Activated naive CD4-positive, alpha-beta T cell treated with anti-CD3 and anti-CD28 coated beads for 36 hours (primary cell): ENCODE measurements at regions of chr12 and their contacts with region 1.

Region 1: DNA sequence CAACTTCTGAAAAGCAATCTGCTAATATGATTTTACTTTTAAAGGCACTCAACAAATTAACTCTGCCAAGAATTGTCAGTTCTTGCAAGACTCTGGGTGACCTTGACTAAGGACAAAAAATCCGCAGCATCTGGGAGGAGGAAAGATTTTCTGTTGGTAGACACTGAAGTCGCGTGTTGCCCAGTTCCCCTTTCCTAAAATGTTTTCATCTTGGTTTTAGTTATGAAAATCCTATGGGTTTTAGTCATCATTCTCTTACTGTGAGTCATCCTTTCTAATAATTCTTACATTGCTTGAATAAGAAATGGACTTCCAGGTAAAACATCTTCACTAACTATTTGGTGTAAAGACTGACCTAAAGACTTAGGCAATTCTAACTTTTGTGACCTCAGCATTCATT is 9.1 kb downstream of the GSG1 start:
- DNase-seq: no peak
- H3K4me3 Mint-ChIP-seq: no peak overlapping the region
- H3K27ac Mint-ChIP-seq: no peak overlapping the region
- H3K4me1 Mint-ChIP-seq: peaks cover 16% of the 10 kb centered on the region
- H3K27me3 Mint-ChIP-seq: no peaks in the 10 kb centered on the region

Region 2: DNA sequence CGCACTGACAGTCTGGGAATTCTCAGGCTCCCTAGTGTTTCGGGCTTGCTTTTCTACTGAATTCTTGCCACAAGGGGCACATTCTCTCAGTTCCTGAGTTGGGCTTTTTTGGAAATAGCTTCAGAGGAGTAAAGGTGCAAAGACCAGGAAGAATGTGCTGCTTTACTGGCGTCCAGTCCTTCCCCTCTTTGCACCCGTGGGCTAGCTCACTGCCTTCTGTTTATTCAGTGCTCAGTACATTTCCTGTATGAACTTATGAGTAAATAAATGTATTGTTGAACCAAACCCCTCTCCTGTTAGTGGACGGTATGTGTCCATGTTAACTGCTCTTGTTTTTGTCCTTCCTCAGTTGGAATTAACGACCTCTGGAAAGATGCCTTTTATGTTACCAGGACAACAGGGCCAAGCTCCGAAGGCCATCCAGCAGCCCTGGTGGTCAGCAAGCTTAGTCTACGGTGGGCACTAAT is 14.9 kb before region 1 on chr12:
- CTCF ChIA-PET with region 1: no interaction called
- intact Hi-C with region 1: no loop called
- DNase-seq: no peak
- H3K4me3 Mint-ChIP-seq: no peak overlapping the region
- H3K27ac Mint-ChIP-seq: no peak overlapping the region
- H3K4me1 Mint-ChIP-seq: no peaks in the 10 kb centered on the region
- H3K27me3 Mint-ChIP-seq: no peaks in the 10 kb centered on the region

Region 3: GRCh38 chr12:13135371-13136178 is 41.2 kb after region 1 on chr12:
- CTCF ChIA-PET with region 1: no interaction called
- intact Hi-C with region 1: no loop called
- DNase-seq: no peak
- H3K4me3 Mint-ChIP-seq: no peak overlapping the region
- H3K27ac Mint-ChIP-seq: no peak overlapping the region
- H3K4me1 Mint-ChIP-seq: no peaks in the 10 kb centered on the region
- H3K27me3 Mint-ChIP-seq: no peaks in the 10 kb centered on the region

Region 4: GRCh38 chr12:13170892-13171490 is 76.6 kb after region 1 on chr12:
- CTCF ChIA-PET with region 1: no interaction called
- intact Hi-C with region 1: no loop called
- DNase-seq: no peak
- H3K4me3 Mint-ChIP-seq: no peak overlapping the region
- H3K27ac Mint-ChIP-seq: no peak overlapping the region
- H3K4me1 Mint-ChIP-seq: peaks cover 17% of the 10 kb centered on the region
- H3K27me3 Mint-ChIP-seq: no peaks in the 10 kb centered on the region

Region 5: GRCh38 chr12:13233830-13234641 is 139.7 kb after region 1 on chr12:
- CTCF ChIA-PET with region 1: interaction called, 3 read pairs
- intact Hi-C with region 1: loop called (anchors 1 kb)
- DNase-seq: peak; percentile 55
- H3K4me3 Mint-ChIP-seq: no peak overlapping the region
- H3K27ac Mint-ChIP-seq: no peak overlapping the region
- H3K4me1 Mint-ChIP-seq: no peaks in the 10 kb centered on the region
- H3K27me3 Mint-ChIP-seq: peaks cover 3% of the 10 kb centered on the region